Activated CD4-positive, alpha-beta T cell treated with anti-CD3 and anti-CD28 coated beads, Interleukin-2, amount 10 ng/mL, durations not matched to agents 24 days and 14 days (primary cell): ENCODE measurements at regions of chr14 and their contacts with region 1.

Region 1: GRCh38 chr14:68843471-68844209 is 50.8 kb upstream of the ZFP36L1 start:
- DNase-seq: peak; percentile 92
- H3K4me3 Mint-ChIP-seq: peak overlapping the region; percentile 40
- H3K27ac Mint-ChIP-seq: peak overlapping the region; percentile 56
- H3K4me1 Mint-ChIP-seq: peaks cover 28% of the 10 kb centered on the region
- H3K27me3 Mint-ChIP-seq: peaks cover 8% of the 10 kb centered on the region

Region 2: GRCh38 chr14:67943947-67944346 is 899.7 kb before region 1 on chr14:
- intact Hi-C with region 1: loop called (anchors 5 kb)
- DNase-seq: peak; percentile 84
- H3K4me3 Mint-ChIP-seq: no peak overlapping the region
- H3K27ac Mint-ChIP-seq: no peak overlapping the region
- H3K4me1 Mint-ChIP-seq: no peaks in the 10 kb centered on the region
- H3K27me3 Mint-ChIP-seq: peaks cover 4% of the 10 kb centered on the region

Region 3: GRCh38 chr14:68487805-68488590 is 355.6 kb before region 1 on chr14:
- intact Hi-C with region 1: loop called (anchors 5 kb)
- DNase-seq: no peak
- H3K4me3 Mint-ChIP-seq: no peak overlapping the region
- H3K27ac Mint-ChIP-seq: no peak overlapping the region
- H3K4me1 Mint-ChIP-seq: peaks cover 25% of the 10 kb centered on the region
- H3K27me3 Mint-ChIP-seq: no peaks in the 10 kb centered on the region

Region 4: GRCh38 chr14:68655911-68656360 is 187.7 kb before region 1 on chr14:
- intact Hi-C with region 1: no loop called
- DNase-seq: no peak
- H3K4me3 Mint-ChIP-seq: no peak overlapping the region
- H3K27ac Mint-ChIP-seq: no peak overlapping the region
- H3K4me1 Mint-ChIP-seq: peaks cover 2% of the 10 kb centered on the region
- H3K27me3 Mint-ChIP-seq: peaks cover 3% of the 10 kb centered on the region

Region 5: DNA sequence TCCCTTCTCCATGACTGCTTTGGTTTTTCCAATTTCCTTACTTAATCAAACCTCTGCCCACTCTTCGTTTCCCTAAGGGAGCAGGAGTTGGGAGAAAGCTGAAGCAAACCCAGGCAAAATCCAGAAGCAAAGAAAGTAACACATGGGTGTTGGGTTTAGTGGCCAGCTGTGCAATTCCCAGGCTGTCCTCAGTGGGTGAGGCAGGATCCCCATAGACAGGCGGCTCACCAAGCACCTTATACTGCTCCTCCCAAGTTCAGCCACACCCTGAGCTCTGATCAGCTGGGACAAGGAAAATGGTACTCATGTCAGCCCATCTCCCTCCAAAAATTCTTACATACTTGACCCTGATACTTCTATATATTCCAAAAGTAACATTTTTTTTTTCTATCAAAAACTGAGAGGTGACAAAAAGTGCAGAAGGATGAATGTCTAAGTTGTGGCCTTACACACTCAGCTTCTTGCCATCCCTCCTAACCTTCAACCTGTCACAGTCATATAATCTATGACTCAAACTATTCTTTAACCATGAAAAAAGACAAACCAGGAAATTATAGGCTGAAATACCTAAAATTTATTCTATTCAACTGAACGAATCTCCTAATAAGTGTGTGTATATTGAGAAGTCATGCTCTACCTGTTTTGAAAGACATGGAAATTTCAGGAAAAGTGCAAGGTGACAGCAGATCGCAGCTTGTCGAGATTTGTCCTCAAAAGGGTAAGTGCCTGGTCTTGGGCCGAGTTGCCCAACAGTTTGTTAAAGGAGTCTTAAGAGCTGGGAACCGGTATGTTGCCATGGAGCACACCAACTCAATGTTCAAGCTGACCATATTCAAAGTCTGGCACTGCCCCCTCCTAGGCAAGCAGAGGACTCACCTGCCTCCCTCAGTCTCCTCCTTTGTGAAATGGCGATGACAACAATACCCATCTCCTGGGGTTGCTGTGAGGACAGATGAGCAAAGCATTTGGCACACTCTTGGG is 33.2 kb before region 1 on chr14:
- intact Hi-C with region 1: no loop called
- DNase-seq: no peak
- H3K4me3 Mint-ChIP-seq: no peak overlapping the region
- H3K27ac Mint-ChIP-seq: no peak overlapping the region
- H3K4me1 Mint-ChIP-seq: peaks cover 31% of the 10 kb centered on the region
- H3K27me3 Mint-ChIP-seq: no peaks in the 10 kb centered on the region

Region 6: GRCh38 chr14:68822132-68822651 is 21.4 kb before region 1 on chr14:
- intact Hi-C with region 1: loop called (anchors 2 kb)
- DNase-seq: peak; percentile 64
- H3K4me3 Mint-ChIP-seq: no peak overlapping the region
- H3K27ac Mint-ChIP-seq: peak overlapping the region; percentile 44
- H3K4me1 Mint-ChIP-seq: peaks cover 38% of the 10 kb centered on the region
- H3K27me3 Mint-ChIP-seq: peaks cover 2% of the 10 kb centered on the region

Region 7: GRCh38 chr14:68854421-68854820 is 10.8 kb after region 1 on chr14:
- intact Hi-C with region 1: no loop called
- DNase-seq: no peak
- H3K4me3 Mint-ChIP-seq: no peak overlapping the region
- H3K27ac Mint-ChIP-seq: no peak overlapping the region
- H3K4me1 Mint-ChIP-seq: no peaks in the 10 kb centered on the region
- H3K27me3 Mint-ChIP-seq: peaks cover 2% of the 10 kb centered on the region

Region 8: GRCh38 chr14:68865542-68865941 is 21.9 kb after region 1 on chr14:
- intact Hi-C with region 1: no loop called
- DNase-seq: no peak
- H3K4me3 Mint-ChIP-seq: no peak overlapping the region
- H3K27ac Mint-ChIP-seq: no peak overlapping the region
- H3K4me1 Mint-ChIP-seq: no peaks in the 10 kb centered on the region
- H3K27me3 Mint-ChIP-seq: no peaks in the 10 kb centered on the region